ENCODE measurements at regions of chr1 and their contacts with region 1.

Region 1: DNA sequence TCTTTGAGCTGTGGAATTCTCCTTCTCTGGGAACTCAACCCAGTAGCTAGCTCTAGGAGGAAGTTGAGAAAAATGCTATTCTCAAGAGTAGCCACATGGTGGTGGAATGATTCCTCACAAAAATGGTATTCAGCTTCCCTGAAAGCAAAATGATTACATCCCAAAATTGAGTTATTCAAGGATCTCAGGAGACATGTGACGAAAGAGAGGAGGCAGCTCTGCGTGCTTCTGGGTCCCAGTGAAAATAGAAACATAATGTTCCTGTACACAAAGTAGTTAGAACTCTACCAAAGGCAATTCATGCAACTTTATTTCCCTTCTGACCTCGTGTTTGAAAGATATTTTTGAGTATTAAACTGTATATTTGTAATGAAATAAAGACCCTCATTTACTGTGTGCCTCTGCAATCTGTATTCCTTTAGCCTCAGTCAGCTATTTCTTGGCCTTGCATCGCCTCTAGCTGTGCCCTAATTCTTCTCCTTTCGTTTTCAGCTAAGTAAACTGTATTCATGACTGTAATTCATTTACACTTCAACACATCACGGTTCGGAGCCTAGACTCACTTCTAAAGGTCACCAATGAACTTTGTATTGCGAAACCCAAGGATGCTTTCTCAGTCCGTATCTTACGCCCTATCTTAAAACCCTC is 167.3 kb downstream of the FASLG start:
- DNase-seq: peak in 2 of 3 donors; percentile 16 to 40
- ATAC-seq: peak; percentile 89 to 92
- H3K4me3 ChIP-seq: peak overlapping the region; percentile 22
- H3K27ac ChIP-seq: peak overlapping the region; percentile 8
- H3K4me1 ChIP-seq: no peaks in the 10 kb centered on the region
- H3K27me3 ChIP-seq: no peaks in the 10 kb centered on the region

Region 2: DNA sequence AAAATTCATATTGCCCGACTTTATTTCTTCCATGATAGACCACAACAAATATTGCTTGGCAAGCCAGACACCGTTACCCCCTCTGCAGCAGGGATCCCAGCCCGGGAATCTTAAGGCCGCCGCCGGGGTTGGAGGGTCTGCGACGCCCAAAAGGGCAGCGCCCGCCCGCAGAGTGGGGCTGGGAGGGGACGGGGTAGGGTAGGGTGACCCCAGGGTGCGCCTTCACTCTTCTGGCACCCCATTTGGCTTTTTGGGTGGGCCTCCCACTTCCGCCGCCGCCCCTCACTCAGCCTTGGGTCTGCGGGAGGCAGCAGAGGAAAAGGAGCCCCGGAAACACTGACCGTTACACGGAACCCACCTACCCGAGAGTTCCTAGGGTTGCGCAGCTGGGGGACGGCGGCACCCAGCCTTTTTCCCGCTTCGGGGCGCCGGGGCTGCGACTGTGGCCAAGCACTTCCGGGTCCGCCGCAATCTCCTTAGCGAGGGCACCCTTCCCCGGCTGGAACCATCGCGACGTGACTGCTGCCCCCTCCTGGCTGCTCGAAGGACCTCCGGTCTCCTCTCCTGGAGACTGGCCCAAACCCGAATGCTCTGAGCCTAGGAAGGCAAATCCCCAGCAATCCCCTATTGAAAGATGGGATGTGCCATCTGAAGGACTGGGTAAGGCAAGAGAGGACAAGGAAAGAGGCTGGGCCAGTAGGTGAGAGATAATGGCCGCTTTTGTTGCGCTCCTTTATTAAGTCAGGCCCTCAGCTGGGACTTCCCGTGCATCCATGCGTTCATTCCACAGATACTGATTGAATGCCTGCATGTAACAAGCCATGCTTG is 382.4 kb before region 1 on chr1 and contains the start of gene PIGC:
- intact Hi-C with region 1: no loop called
- DNase-seq: peak; percentile 90 to 97 (median 96)
- ATAC-seq: peak; percentile 98 to 99
- H3K4me3 ChIP-seq: peak within 1 kb of the TSS; percentile 98
- H3K27ac ChIP-seq: peak within 1 kb of the TSS; percentile 70
- H3K4me1 ChIP-seq: peaks cover 4% of the 10 kb centered on the region
- H3K27me3 ChIP-seq: no peaks in the 10 kb centered on the region
- total RNA-seq, gene PIGC: 15.0 to 19.1 (median 18.5) TPM

Region 3: GRCh38 chr1:172466795-172467407 is 359.3 kb before region 1 on chr1:
- intact Hi-C with region 1: no loop called
- DNase-seq: no peak
- ATAC-seq: peak in 1 of 2 donors; percentile 22
- H3K4me3 ChIP-seq: no peak overlapping the region
- H3K27ac ChIP-seq: no peak overlapping the region
- H3K4me1 ChIP-seq: peaks cover 2% of the 10 kb centered on the region
- H3K27me3 ChIP-seq: no peaks in the 10 kb centered on the region

Region 4: DNA sequence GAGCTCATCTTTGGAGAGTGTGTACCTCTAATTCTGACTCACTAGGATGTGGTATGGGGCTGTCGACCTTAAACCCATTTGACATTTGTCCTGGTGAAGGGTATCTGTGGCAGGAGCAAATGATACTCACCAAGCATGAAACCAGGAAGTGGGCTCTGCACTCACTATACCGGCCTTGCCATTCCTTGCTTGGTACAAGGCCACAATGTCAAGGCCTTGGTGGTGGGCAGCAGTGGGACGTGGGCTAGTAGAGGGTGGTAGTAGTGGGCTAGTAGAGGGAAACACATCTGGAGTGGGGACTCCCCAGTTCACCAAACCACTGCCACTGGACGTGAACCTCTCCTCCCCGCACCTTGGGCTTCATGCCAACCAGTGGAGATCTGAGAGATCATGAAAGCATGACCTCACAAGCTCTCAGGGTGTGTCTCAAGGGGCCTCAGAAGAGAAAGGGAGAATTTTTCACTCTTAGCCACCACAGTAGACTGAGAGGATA is 369.4 kb after region 1 on chr1:
- intact Hi-C with region 1: loop called in 3 of 4 experiments (anchors 5 kb)
- DNase-seq: no peak
- ATAC-seq: no peak
- H3K4me3 ChIP-seq: no peak overlapping the region
- H3K27ac ChIP-seq: no peak overlapping the region
- H3K4me1 ChIP-seq: no peaks in the 10 kb centered on the region
- H3K27me3 ChIP-seq: no peaks in the 10 kb centered on the region